ENCODE measurements at regions of chr4 and their contacts with region 1.

Region 1: GRCh38 chr4:77095101-77095821 is 19.5 kb upstream of the CCNI start:
- DNase-seq: peak; percentile 78 to 88 (median 83)
- ATAC-seq: peak; percentile 96 to 98 (median 98)
- H3K4me3 ChIP-seq: no peak overlapping the region
- H3K27ac ChIP-seq: no peak overlapping the region
- H3K4me1 ChIP-seq: peaks cover 0 to 19% (median 7%) of the 10 kb centered on the region in 12 donors
- H3K27me3 ChIP-seq: no peaks in the 10 kb centered on the region
- CTCF ChIP-seq: peak; percentile 74 to 94 (median 82)
- POLR2A ChIP-seq: no peak

Region 2: GRCh38 chr4:77132652-77133312 is 37.5 kb after region 1 on chr4:
- intact Hi-C with region 1: loop called in 2 of 10 experiments (anchors 5 kb)
- DNase-seq: no peak
- ATAC-seq: no peak
- H3K4me3 ChIP-seq: no peak overlapping the region
- H3K27ac ChIP-seq: no peak overlapping the region
- H3K4me1 ChIP-seq: peaks cover 0 to 10% (median 0%) of the 10 kb centered on the region in 12 donors
- H3K27me3 ChIP-seq: no peaks in the 10 kb centered on the region
- CTCF ChIP-seq: no peak
- POLR2A ChIP-seq: no peak

Region 3: GRCh38 chr4:77156533-77156911 is 61.3 kb after region 1 on chr4:
- intact Hi-C with region 1: loop called in 7 of 10 experiments (anchors 2 to 5 kb)
- DNase-seq: peak; percentile 90 to 96 (median 95)
- ATAC-seq: peak; percentile 98 to 99 (median 98)
- H3K4me3 ChIP-seq: peak overlapping the region; percentile 65 to 97 (median 86)
- H3K27ac ChIP-seq: peak overlapping the region; percentile 80 to 95 (median 91)
- H3K4me1 ChIP-seq: peaks cover 0 to 34% (median 5%) of the 10 kb centered on the region in 12 donors
- H3K27me3 ChIP-seq: no peaks in the 10 kb centered on the region
- CTCF ChIP-seq: no peak
- POLR2A ChIP-seq: no peak

Region 4: GRCh38 chr4:77203380-77204197 is 108.3 kb after region 1 on chr4:
- intact Hi-C with region 1: loop called (anchors 1 to 10 kb)
- DNase-seq: peak in 4 of 5 donors; percentile 44 to 65 (median 54)
- ATAC-seq: peak; percentile 47 to 85 (median 82)
- H3K4me3 ChIP-seq: no peak overlapping the region
- H3K27ac ChIP-seq: no peak overlapping the region
- H3K4me1 ChIP-seq: peaks cover 0 to 4% (median 0%) of the 10 kb centered on the region in 12 donors
- H3K27me3 ChIP-seq: peaks cover 0 to 4% (median 0%) of the 10 kb centered on the region in 9 donors
- CTCF ChIP-seq: peak; percentile 54 to 83 (median 74)
- POLR2A ChIP-seq: no peak

Measured in heart left ventricle (tissue), 16 donors.